Gastrocnemius medialis (tissue), 4 donors: ENCODE measurements at regions of chr10 and their contacts with region 1.

Region 1: DNA sequence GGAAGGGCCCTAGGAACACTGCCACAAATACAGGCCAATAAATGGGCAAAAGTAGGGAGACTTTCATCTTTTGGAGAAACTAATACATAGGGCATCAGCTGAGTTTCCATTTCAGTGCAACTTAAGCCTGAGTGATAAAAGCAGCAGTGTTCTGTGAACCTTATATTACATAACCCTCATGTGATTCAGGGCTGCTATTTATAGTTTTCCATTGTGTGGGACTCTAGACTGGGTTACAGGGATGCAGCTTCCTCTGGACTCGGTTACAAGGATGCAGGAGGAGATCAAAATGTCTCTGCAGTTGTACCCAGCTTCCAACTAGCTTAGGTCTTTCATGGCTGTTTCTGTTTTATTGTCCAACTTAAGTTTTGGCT is 32.5 kb downstream of the CDK1 start:
- DNase-seq: peak; percentile 23 to 29
- ATAC-seq: peak; percentile 98
- H3K4me3 ChIP-seq: no peak overlapping the region
- H3K27ac ChIP-seq: peak overlapping the region; percentile 59 to 86 (median 79)
- H3K4me1 ChIP-seq: peaks cover 13 to 16% of the 10 kb centered on the region in 2 donors
- H3K27me3 ChIP-seq: no peaks in the 10 kb centered on the region
- CTCF ChIP-seq: no peak
- POLR2A ChIP-seq: no peak

Region 2: GRCh38 chr10:60964257-60965235 is 153.8 kb after region 1 on chr10:
- in situ Hi-C with region 1: loop called (anchors 5 kb)
- intact Hi-C with region 1: no loop called
- DNase-seq: peak; percentile 57 to 65
- ATAC-seq: peak; percentile 92
- H3K4me3 ChIP-seq: no peak overlapping the region
- H3K27ac ChIP-seq: peak overlapping the region in 3 of 4 donors; percentile 49 to 60 (median 53)
- H3K4me1 ChIP-seq: peaks cover 6 to 14% of the 10 kb centered on the region in 2 donors
- H3K27me3 ChIP-seq: no peaks in the 10 kb centered on the region
- CTCF ChIP-seq: peak; percentile 78 to 86 (median 80)
- POLR2A ChIP-seq: no peak

Region 3: GRCh38 chr10:61135276-61135721 is 324.5 kb after region 1 on chr10:
- in situ Hi-C with region 1: loop called in 3 of 4 experiments (anchors 5 to 25 kb)
- intact Hi-C with region 1: no loop called
- DNase-seq: no peak
- ATAC-seq: no peak
- H3K4me3 ChIP-seq: no peak overlapping the region
- H3K27ac ChIP-seq: no peak overlapping the region
- H3K4me1 ChIP-seq: peaks cover 0 to 5% of the 10 kb centered on the region in 2 donors
- H3K27me3 ChIP-seq: no peaks in the 10 kb centered on the region
- CTCF ChIP-seq: no peak
- POLR2A ChIP-seq: no peak